ENCODE measurements at regions of chr9 and their contacts with region 1.

Region 1: DNA sequence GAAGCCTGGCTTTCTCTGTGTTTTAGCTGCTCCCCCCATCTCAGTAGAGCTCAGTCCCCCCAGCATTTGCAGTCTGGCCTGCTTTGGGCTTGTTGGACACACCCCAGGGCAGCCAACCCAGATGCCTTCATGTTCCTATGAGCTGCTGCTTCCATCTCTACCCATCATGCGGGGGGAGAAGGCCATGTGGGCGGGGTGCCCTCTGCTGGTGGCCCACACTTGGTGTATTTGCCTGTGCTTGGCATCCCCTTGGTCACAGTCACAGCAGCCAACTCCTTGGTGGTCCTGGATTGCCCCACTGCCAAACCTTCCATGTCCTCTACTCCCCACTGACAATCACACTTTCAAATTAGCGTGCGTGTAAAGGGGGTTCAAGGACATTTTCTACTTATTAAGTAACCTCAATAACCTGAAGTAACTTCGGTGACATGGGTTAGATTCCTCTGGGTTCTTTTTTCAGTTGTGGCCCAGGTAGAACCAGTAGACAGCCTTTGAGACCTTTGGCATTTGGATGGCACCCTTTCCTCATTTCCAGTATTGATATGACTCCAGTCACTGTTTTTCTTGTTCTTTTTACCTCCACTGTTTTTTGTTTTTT is 42.8 kb downstream of the SNX30 start:
- DNase-seq: peak; percentile 75 to 87
- ATAC-seq: peak; percentile 87 to 100 (median 98)
- H3K4me3 ChIP-seq: no peak overlapping the region
- H3K4me3 Mint-ChIP-seq: no peak overlapping the region
- H3K27ac ChIP-seq: no peak overlapping the region
- H3K27ac Mint-ChIP-seq: no peak overlapping the region
- H3K4me1 ChIP-seq: peaks cover 4% of the 10 kb centered on the region
- H3K4me1 Mint-ChIP-seq: peaks cover 5 to 17% of the 10 kb centered on the region in 2 donors
- H3K27me3 ChIP-seq: no peaks in the 10 kb centered on the region
- H3K27me3 Mint-ChIP-seq: no peaks in the 10 kb centered on the region
- CTCF ChIP-seq: peak; percentile 75

Region 2: DNA sequence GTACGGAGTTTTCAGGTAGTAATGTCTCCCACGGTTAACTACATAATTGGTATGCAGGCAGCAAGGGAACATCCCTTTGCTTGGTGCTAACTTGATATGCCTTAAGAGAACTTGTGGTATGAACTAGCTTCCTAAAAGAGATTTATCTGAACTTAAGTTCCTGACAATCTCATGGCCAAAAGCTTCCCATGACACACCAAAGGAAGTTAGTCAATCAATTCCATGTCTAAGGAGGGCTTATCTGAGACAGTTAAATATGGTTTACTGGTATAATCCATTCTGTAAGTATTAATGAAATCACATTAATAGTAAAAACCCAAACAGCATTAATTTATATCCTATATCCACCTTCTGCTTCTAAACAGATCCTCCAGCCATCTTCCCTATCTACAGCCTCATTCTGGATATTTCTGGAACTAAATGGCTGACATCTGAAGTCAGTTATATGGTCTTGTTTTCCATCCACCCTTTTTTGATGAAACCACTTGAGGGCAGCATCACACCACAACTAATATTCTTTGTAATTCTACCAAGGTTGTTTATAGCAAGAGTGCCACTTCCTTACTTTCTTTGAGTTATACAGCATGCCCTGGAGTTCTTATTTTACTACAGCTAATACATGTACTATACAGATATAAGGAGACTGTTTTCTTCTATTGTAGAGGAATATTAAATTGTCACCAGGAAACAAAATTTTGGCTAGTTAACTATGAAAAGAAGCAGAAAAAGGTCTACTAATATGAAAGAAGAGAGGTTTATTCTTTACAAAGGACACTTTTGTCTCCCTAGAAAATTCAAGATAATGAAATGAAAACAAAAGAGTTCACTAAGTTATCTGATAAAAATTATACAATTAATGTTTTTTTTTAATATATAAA is 1033.3 kb before region 1 on chr9:
- intact Hi-C with region 1: loop called (anchors 1 kb)
- DNase-seq: peak in 1 of 2 donors; percentile 83
- ATAC-seq: peak; percentile 72 to 82 (median 73)
- H3K4me3 ChIP-seq: no peak overlapping the region
- H3K4me3 Mint-ChIP-seq: no peak overlapping the region
- H3K27ac ChIP-seq: no peak overlapping the region
- H3K27ac Mint-ChIP-seq: no peak overlapping the region
- H3K4me1 ChIP-seq: no peaks in the 10 kb centered on the region
- H3K4me1 Mint-ChIP-seq: peaks cover 0 to 4% of the 10 kb centered on the region in 2 donors
- H3K27me3 ChIP-seq: no peaks in the 10 kb centered on the region
- H3K27me3 Mint-ChIP-seq: no peaks in the 10 kb centered on the region
- CTCF ChIP-seq: peak; percentile 75

Region 3: DNA sequence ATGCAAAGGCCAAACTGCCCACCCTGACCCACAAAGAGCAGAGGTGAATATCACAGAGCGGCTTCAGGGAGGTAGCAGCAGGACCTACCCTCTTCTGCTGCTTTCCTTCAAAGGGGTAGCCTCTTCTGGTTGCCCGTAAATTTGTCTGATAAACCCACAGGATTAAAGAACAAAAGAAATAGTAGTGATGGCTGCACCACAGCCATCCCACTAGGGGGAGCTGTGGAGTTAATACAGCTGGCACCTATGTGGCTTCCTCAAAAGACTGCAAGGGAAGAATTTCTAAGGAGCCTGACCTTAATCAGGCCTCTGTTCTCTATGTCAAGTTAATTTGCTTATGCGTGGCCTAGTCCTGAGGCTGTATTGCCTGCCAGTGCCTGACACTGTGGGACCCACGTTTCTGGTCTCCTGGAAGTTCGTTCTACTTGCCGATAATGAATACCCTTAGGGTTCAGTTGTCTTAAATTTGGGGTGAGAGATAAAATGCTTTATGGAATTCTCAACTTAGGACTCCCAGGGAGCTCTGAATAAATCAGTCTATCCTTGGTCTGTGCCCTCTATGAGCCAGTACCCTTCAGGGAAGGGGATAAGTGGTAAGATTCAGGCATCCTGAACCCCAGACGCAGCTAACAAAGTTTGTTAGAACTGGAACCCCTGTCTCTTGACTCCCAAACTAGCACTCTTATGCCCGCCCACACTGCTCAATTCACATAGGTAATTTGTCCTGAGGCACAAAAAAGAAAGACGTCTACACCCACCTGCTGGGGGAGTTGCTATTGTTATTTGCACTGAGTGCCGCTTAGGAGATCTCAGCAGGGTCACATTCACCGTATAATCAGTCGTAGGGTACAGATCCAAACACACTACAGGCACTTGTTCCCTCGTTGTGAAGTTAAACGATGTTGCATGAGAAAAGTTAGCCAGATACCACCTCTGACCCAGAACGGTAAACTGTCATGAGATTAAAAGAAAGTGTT is 695.3 kb before region 1 on chr9:
- intact Hi-C with region 1: loop called (anchors 5 kb)
- DNase-seq: peak; percentile 47 to 89
- ATAC-seq: peak; percentile 87 to 94 (median 91)
- H3K4me3 ChIP-seq: no peak overlapping the region
- H3K4me3 Mint-ChIP-seq: no peak overlapping the region
- H3K27ac ChIP-seq: no peak overlapping the region
- H3K27ac Mint-ChIP-seq: peak overlapping the region; percentile 59 to 63
- H3K4me1 ChIP-seq: peaks cover 10% of the 10 kb centered on the region
- H3K4me1 Mint-ChIP-seq: peaks cover 30 to 34% of the 10 kb centered on the region in 2 donors
- H3K27me3 ChIP-seq: no peaks in the 10 kb centered on the region
- H3K27me3 Mint-ChIP-seq: no peaks in the 10 kb centered on the region
- CTCF ChIP-seq: peak; percentile 89

Region 4: GRCh38 chr9:112443200-112443599 is 350.1 kb before region 1 on chr9:
- intact Hi-C with region 1: loop called (anchors 1 kb)
- DNase-seq: peak in 1 of 2 donors; percentile 61
- ATAC-seq: peak in 2 of 3 donors; percentile 45 to 47
- H3K4me3 ChIP-seq: no peak overlapping the region
- H3K4me3 Mint-ChIP-seq: no peak overlapping the region
- H3K27ac ChIP-seq: no peak overlapping the region
- H3K27ac Mint-ChIP-seq: no peak overlapping the region
- H3K4me1 ChIP-seq: no peaks in the 10 kb centered on the region
- H3K4me1 Mint-ChIP-seq: peaks cover 12 to 15% of the 10 kb centered on the region in 2 donors
- H3K27me3 ChIP-seq: no peaks in the 10 kb centered on the region
- H3K27me3 Mint-ChIP-seq: no peaks in the 10 kb centered on the region
- CTCF ChIP-seq: peak; percentile 63

Region 5: GRCh38 chr9:112764344-112764743 is 29.0 kb before region 1 on chr9:
- intact Hi-C with region 1: no loop called
- DNase-seq: no peak
- ATAC-seq: no peak
- H3K4me3 ChIP-seq: no peak overlapping the region
- H3K4me3 Mint-ChIP-seq: no peak overlapping the region
- H3K27ac ChIP-seq: no peak overlapping the region
- H3K27ac Mint-ChIP-seq: no peak overlapping the region
- H3K4me1 ChIP-seq: peaks cover 12% of the 10 kb centered on the region
- H3K4me1 Mint-ChIP-seq: peaks cover 26 to 57% of the 10 kb centered on the region in 2 donors
- H3K27me3 ChIP-seq: no peaks in the 10 kb centered on the region
- H3K27me3 Mint-ChIP-seq: peaks cover 14% of the 10 kb centered on the region in 2 donors
- CTCF ChIP-seq: no peak

Measured in natural killer cell (primary cell).